Left cardiac atrium (tissue), 4 donors: ENCODE measurements at regions of chr7 and their contacts with region 1.

Region 1: GRCh38 chr7:150909200-150909995 is 57.1 kb downstream of the AOC1 start:
- DNase-seq: no peak
- ATAC-seq: no peak

Region 2: DNA sequence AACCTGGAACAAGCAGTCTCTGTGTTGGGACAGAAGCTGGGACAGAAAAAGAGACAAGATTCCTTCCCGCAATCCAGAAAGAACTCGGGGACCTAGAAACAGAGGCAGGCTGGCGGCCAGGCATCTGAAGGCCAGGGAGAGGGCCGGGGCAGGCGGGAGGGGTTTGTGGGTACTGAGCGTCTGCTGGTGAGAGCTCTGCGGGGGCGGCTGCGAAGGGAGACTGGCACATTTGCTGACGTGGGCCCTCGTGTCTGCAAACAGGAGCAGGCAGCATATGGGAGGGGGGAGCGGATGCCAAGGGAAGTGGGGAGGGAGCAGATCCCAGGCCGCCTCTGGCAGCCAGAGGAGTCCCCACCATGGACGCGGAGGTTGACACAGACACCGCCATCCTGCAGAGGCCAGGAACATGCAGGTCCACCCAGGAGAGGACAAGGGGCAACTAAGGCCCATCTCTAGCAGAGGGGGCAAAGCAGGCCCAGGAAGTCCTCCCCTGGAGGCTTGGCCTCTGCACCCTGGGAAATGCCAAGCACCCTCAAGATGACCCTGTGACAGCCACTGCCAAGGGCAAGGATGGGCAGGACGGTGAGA is 36.5 kb after region 1 on chr7:
- intact Hi-C with region 1: loop called in 1 of 2 experiments (anchors 5 kb)
- DNase-seq: peak; percentile 81
- ATAC-seq: peak; percentile 67 to 77